Activated CD4-positive, alpha-beta memory T cell treated with anti-CD3 and anti-CD28 coated beads, Interleukin-2, amount 10 ng/mL, durations not matched to agents 7 days and 5 days (primary cell): ENCODE measurements at regions of chr2 and their contacts with region 1.

Region 1: DNA sequence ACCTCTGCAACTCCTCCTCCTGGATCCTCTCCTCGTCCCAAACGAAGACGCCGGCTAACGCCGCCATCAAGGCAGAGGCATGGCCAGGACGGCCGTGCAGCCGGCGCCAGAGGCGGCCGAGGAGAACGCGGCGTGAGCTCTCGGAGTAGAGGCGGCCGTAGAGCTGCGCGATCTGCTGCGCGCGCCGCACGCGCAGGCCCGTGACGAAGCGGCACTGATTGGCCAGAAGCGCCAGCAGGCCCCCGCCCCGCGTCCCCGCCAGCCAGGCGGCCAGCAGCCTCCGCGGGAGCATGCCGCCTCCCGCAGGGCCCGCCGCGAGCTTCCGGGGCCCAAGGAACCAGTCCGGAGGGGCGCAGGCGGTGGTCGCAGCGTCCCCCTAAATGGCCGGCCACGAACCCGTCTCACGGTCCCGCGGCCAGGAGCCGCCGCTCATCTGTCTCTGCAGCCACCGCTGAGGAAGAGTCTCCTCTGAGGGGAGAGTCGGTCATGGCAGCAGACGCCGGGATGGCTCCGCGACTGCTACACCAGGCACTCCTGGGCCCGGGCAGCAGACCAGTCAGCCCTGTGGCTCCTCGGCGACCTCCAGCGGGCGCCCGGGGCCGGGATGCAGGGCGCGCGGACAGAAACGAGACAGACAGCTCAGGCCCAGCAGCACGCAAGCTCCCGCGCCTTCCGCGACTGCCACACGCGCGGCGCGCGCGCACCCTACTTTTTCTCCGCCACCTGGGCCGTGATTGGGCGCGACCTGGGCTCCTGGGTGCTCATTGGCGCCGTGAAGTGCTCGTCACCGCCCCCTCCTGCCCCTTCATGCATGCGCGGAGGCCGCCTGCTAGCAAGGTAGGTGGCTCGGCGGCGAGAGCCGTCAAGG is at the start of gene STARD7:
- DNase-seq: peak; percentile 98
- H3K4me3 Mint-ChIP-seq: peak within 1 kb of the TSS; percentile 87
- H3K27ac Mint-ChIP-seq: peak within 1 kb of the TSS; percentile 83
- H3K4me1 Mint-ChIP-seq: peaks cover 52% of the 10 kb centered on the region
- H3K27me3 Mint-ChIP-seq: no peaks in the 10 kb centered on the region
- total RNA-seq, gene STARD7: 108 to 113 TPM

Region 2: DNA sequence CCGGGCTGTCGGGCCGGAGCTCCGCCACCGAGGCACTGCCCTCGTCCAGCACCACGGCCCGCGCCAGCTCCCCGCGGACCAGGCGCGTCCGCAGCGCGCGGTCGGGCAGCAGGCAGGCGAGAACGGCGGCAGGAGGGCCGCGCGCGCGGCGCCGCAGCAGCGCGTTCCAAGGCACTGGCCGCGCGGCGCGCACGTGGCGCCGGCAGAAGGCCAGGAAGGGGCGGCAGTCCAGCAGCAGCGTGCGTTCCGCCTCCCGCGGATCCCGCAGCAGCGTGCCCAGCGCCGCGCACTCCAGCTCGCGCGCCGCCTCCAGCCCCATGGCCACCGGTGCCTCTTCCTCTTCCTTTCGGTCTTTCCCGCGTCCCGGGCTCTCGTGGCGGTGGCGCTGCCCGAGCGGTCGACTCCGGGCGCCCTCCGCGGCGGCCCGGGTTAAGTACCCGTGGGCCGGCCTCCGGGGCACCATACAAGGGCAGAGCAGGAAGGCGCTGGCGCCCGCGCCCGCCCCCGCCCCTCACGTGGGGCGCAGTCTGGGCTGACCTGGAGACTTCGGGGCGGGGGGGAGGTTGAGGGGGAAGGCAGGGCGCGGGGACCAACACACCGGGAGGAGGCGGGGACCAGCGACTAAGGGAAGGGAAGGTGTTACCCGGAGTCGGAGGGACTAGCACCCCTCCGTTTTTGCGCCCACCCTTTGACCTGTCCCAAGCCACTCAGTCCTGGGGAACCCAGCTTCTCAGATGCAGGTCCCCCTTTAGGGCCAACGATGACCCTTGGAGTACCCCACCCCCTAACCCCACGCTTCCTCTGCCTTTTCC is 63.1 kb before region 1 on chr2 and contains the start of gene DUSP2:
- CTCF ChIA-PET with region 1: interaction called, 4 read pairs
- POLR2A ChIA-PET with region 1: interaction called, 35 read pairs
- DNase-seq: peak; percentile 90
- H3K4me3 Mint-ChIP-seq: peak within 1 kb of the TSS; percentile 88
- H3K27ac Mint-ChIP-seq: peak within 1 kb of the TSS; percentile 95
- H3K4me1 Mint-ChIP-seq: peaks cover 67% of the 10 kb centered on the region
- H3K27me3 Mint-ChIP-seq: no peaks in the 10 kb centered on the region
- total RNA-seq, gene DUSP2: 40.8 to 42.5 TPM

Region 3: GRCh38 chr2:96233880-96234316 is 25.5 kb after region 1 on chr2:
- CTCF ChIA-PET with region 1: interaction called, 3 read pairs
- POLR2A ChIA-PET with region 1: interaction called, 39 read pairs
- DNase-seq: no peak
- H3K4me3 Mint-ChIP-seq: no peak overlapping the region
- H3K27ac Mint-ChIP-seq: no peak overlapping the region
- H3K4me1 Mint-ChIP-seq: no peaks in the 10 kb centered on the region
- H3K27me3 Mint-ChIP-seq: no peaks in the 10 kb centered on the region

Region 4: GRCh38 chr2:96260404-96261260 is 52.3 kb after region 1 on chr2:
- CTCF ChIA-PET with region 1: interaction called, 11 read pairs
- POLR2A ChIA-PET with region 1: interaction called, 31 read pairs
- DNase-seq: peak; percentile 50
- H3K4me3 Mint-ChIP-seq: no peak overlapping the region
- H3K27ac Mint-ChIP-seq: peak overlapping the region; percentile 76
- H3K4me1 Mint-ChIP-seq: peaks cover 72% of the 10 kb centered on the region
- H3K27me3 Mint-ChIP-seq: no peaks in the 10 kb centered on the region

Region 5: DNA sequence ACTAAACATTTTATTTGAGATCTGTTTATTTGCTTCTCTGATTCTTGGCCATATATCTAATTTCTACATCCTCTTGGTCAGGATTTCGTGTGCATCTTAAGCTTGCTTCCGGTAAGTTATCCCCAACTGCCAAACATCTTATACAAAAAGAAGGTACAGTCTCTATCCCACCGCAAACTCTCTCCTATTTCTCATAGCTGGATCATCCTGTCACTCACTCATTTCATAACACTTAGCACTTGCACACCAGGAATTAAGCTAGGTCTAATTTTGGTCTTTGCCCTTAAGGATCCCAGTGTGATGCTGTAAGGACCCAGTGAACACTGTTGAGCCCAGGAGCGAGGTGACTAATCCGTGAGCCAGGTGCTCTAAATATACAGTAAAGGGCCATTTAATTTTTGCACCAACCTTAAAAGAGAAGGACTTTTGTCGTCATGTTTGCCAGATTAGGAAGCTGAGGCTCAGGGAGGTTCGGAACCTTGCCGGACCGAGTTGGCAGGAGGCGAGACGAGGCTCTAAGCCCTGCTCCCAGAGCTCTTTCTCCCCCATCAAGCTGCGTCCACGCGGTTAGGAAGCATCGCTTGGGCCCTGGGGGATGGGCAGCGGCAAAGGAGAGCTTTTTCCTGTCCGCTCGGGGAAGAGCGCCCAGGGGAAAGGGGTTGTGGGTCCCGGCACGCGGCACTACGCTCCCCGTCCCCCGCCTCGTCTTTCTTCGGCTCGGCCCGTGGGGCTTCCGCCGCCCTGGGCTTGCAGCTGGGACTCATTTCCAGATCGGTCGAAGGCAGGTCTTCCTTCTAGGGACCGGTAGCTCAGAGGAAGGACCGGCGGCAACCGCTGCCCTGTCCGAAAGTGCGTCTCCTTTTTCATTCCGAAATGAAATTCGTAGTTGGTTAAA is 112.6 kb after region 1 on chr2:
- CTCF ChIA-PET with region 1: interaction called, 3 read pairs
- POLR2A ChIA-PET with region 1: interaction called, 14 read pairs
- DNase-seq: peak; percentile 46
- H3K4me3 Mint-ChIP-seq: peak overlapping the region; percentile 80
- H3K27ac Mint-ChIP-seq: peak overlapping the region; percentile 84
- H3K4me1 Mint-ChIP-seq: peaks cover 70% of the 10 kb centered on the region
- H3K27me3 Mint-ChIP-seq: no peaks in the 10 kb centered on the region